ENCODE measurements at regions of chr1 and their contacts with region 1.

Region 1: DNA sequence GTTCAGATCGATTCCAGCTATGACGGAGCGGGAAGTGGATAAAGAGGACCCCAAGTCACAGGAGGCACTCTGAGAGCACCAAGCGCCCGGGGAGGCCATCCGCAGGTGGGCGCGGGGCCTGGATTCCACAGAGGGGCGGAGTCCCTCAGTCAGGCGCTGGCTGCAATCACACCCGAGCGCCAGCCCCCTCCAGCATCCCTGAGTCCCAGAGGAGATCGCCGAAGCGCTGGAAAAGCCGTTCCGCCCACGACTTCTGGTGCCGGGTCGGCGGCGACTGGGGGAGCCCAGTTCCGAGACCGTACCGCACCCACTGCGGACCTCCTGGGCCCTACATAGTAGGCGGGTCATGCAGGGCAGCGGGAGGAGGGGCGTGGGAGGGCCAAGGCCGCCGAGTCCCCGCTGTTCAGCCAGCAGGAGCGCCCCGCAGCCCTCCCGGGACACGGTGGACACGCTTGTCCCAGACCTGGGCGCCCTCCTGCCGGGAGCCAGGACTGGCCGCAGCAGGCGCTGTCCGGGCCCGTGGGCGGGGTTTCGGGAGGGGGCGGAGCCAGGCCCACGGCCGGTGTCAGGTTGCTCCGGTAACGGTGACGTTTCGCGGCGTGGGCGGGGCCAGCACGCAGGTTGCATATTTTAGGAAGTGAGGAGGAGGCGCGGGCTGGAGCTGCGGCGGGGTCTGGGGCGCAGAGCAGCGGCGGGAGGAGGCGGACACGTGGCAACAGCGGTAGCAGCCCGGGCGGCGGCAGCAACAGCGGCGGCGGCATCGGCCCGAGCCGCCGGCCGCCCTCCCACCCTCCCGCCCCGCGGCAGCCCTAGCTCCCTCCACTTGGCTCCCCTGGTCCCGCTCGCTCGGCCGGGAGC is at the start of gene ATP1A1:
- DNase-seq: peak; percentile 99
- ATAC-seq: peak; percentile 79
- H3K4me3 ChIP-seq: peak within 1 kb of the TSS; percentile 46 to 90 (median 84)
- H3K4me3 Mint-ChIP-seq: peak within 1 kb of the TSS; percentile 96
- H3K27ac ChIP-seq: peak within 1 kb of the TSS; percentile 81 to 91
- H3K27ac Mint-ChIP-seq: peak within 1 kb of the TSS; percentile 96
- H3K4me1 ChIP-seq: peaks cover 39 to 44% of the 10 kb centered on the region in 2 donors
- H3K4me1 Mint-ChIP-seq: peaks cover 37% of the 10 kb centered on the region
- H3K27me3 ChIP-seq: peaks cover 0 to 7% (median 3%) of the 10 kb centered on the region in 4 experiments
- H3K27me3 Mint-ChIP-seq: peaks cover 20% of the 10 kb centered on the region
- CTCF ChIP-seq: no peak
- total RNA-seq, gene ATP1A1: 101 and 107 TPM in 2 replicates

Region 2: DNA sequence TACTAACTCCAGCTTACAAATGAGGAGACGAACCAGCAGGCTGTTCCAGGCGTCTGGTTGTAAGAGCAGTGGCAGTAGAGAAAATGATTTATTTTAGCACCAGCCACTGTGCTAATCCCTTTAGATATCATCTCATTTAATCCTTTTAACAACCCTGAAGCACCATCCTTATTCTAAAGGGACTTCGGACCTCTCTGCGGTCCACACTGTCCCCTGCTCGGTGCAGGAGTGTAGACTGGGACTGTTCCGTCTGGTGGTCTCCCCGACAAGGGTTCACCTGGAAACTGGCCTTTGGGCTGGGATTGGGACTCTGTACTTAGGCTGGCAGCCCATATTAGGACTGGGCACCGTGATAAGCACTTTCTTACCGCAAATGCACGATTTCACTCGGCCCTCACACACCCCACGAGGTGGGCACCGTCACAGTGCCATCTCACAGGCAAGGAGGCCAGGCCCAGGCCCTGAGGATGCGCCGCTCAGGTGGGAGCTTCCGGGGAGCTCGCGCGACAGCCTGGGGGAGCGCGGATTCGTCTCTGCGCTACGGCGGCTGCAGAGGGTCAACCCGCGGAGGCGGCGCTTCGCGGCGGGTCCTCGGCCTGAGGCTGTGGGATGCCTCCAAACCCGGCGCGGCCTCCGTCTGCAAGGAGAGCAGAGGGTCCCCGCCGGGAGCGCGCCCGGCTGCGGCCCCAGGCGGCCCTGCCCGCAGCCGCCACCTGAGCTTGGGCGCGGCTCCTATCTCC is 45.4 kb after region 1 on chr1:
- CTCF ChIA-PET with region 1: interaction called, 4 read pairs
- POLR2A ChIA-PET with region 1: interaction called, 3 read pairs
- intact Hi-C with region 1: loop called (anchors 1 kb)
- DNase-seq: peak; percentile 92
- ATAC-seq: peak; percentile 95
- H3K4me3 ChIP-seq: peak overlapping the region; percentile 66 to 86 (median 84)
- H3K4me3 Mint-ChIP-seq: peak overlapping the region; percentile 86
- H3K27ac ChIP-seq: peak overlapping the region; percentile 62 to 80
- H3K27ac Mint-ChIP-seq: peak overlapping the region; percentile 91
- H3K4me1 ChIP-seq: peaks cover 16 to 20% of the 10 kb centered on the region in 2 donors
- H3K4me1 Mint-ChIP-seq: peaks cover 26% of the 10 kb centered on the region
- H3K27me3 ChIP-seq: no peaks in the 10 kb centered on the region
- H3K27me3 Mint-ChIP-seq: peaks cover 4% of the 10 kb centered on the region
- CTCF ChIP-seq: no peak

Measured in B cell (primary cell).